ENCODE measurements at regions of chr12 and their contacts with region 1.

Region 1: DNA sequence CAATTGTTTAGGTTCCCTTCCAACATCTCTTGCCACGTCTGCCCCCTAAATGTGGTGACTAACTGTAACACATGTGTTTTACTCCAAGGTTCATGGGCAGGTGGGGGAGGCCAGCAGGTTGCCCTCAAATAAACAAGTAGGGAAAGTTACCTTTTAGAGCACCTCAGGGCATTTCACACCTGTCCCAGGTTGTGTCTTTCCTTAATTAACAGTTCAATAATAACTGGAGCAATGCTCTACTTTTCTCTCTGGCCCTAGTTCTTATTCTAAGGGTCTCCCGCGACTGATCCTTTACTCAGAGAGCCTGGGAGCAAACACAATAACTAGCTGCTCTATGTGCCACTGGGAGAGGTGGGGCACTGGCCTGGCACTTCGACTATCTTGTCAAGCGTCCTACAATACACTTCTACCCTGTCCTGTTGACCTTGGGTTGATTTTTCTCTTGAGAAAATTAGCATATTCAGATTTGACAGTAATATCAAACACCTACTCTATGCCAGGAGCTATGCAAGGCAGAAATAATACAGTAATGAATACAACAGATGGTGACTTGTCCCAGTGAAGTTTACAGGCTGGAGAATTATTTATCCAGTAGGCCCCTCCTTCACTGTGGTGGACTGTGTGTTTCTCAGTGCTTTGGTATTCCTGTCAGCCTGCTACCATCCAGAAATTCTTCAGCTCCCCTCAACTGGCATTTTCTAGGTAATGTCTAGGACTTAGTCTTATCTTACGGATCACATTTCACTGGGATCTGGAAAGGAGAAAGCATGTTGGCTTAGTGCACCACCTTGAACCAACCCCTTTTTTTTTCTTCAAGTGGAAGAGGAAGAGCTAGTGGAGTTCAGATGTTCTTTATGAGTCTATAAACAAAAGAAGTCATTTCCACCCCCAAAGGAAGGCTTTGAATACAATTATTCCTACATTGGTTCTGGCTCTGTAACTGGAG is 202.6 kb downstream of the CRADD start:
- DNase-seq: peak; percentile 54
- H3K4me3 Mint-ChIP-seq: peak overlapping the region; percentile 66
- H3K27ac Mint-ChIP-seq: peak overlapping the region; percentile 87
- H3K4me1 Mint-ChIP-seq: peaks cover 31% of the 10 kb centered on the region
- H3K27me3 Mint-ChIP-seq: no peaks in the 10 kb centered on the region

Region 2: DNA sequence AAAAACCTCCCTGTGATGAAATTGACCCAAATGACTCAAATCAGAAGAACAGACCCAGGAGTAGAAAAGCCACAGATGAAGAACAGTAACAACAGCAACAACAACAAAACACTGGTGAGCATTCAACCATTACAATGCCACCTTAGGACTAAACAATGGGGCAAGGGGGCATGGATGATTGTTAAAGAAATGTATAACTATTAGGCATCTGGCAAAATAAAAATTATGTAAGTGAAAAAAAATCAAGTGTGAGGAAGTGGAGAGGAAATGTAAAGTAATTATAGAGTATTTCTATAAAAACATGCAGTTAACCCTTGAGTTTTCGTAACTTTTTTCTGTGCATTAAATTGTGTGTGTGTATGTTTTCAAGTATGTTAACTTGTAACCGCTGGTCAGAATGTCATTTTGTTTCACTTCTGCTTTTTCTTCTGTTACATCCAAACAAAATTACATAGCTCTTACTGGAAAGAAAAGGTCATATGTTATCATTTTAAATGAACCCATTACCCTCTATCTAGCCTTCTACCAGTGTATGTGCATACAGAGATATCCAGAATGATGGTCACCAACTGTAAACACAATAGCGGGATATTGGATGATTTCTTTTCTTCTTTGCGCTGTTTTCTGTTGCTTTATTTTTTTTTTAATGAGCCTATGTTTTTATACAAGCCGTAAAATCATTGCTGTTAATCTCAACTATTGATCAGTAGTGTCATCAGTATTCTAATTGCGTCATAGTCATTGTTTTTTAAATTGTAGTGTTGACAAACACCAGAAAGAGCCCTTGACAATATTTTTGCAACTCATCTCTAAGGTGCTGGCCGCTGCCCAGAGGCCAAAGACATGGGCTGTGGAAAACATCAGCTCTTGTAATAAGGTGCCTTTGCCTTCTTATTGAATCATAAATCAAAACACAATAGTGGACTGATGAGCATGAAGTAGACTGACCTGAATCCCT is 32.0 kb before region 1 on chr12:
- intact Hi-C with region 1: loop called (anchors 2 kb)
- DNase-seq: peak; percentile 73
- H3K4me3 Mint-ChIP-seq: peak overlapping the region; percentile 43
- H3K27ac Mint-ChIP-seq: peak overlapping the region; percentile 62
- H3K4me1 Mint-ChIP-seq: peaks cover 48% of the 10 kb centered on the region
- H3K27me3 Mint-ChIP-seq: no peaks in the 10 kb centered on the region

Region 3: GRCh38 chr12:93901739-93902138 is 22.0 kb after region 1 on chr12:
- intact Hi-C with region 1: loop called (anchors 1 kb)
- DNase-seq: no peak
- H3K4me3 Mint-ChIP-seq: no peak overlapping the region
- H3K27ac Mint-ChIP-seq: no peak overlapping the region
- H3K4me1 Mint-ChIP-seq: peaks cover 48% of the 10 kb centered on the region
- H3K27me3 Mint-ChIP-seq: no peaks in the 10 kb centered on the region

Region 4: GRCh38 chr12:94039914-94040313 is 160.2 kb after region 1 on chr12:
- intact Hi-C with region 1: no loop called
- DNase-seq: no peak
- H3K4me3 Mint-ChIP-seq: no peak overlapping the region
- H3K27ac Mint-ChIP-seq: no peak overlapping the region
- H3K4me1 Mint-ChIP-seq: no peaks in the 10 kb centered on the region
- H3K27me3 Mint-ChIP-seq: no peaks in the 10 kb centered on the region

Measured in activated CD4-positive, alpha-beta T cell treated with anti-CD3 and anti-CD28 coated beads, Interleukin-2, amount 10 ng/mL, durations not matched to agents 24 days and 14 days (primary cell).